Gastrocnemius medialis (tissue), 4 donors: ENCODE measurements at regions of chr1 and their contacts with region 1.

Region 1: DNA sequence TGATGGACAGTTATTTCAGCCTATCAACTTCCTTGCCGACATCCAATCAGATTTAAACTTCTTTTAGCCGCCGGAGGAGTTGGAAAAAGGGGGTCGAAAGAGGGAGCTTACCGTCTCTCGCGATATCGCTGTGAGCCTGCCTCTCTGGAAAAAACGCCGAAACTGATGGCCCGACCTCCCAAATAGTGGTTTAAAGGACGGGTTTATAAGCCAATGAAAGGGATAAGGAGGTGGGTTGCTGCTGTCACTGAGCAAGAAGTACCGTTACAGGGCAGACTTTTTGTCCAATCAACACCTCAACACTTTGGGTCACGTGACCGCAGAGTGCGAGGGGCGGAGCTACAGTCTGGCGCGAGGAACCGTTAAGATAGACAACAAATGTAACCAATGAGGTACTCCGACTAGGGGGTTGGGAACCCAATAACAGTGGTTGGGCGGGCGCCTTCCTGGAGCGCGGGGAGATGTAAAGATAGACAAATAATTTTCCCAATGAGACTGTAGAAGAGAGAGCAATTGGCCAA is at the start of gene RBM15:
- DNase-seq: peak; percentile 99 to 100
- ATAC-seq: peak; percentile 74 to 82
- H3K4me3 ChIP-seq: peak within 1 kb of the TSS; percentile 78 to 88 (median 84)
- H3K27ac ChIP-seq: peak within 1 kb of the TSS; percentile 93 to 99 (median 96)
- H3K4me1 ChIP-seq: peaks cover 45 to 51% of the 10 kb centered on the region in 2 donors
- H3K27me3 ChIP-seq: no peaks in the 10 kb centered on the region
- CTCF ChIP-seq: no peak
- POLR2A ChIP-seq: no peak
- total RNA-seq, gene RBM15: 27.8 to 44.9 (median 30.2) TPM

Region 2: DNA sequence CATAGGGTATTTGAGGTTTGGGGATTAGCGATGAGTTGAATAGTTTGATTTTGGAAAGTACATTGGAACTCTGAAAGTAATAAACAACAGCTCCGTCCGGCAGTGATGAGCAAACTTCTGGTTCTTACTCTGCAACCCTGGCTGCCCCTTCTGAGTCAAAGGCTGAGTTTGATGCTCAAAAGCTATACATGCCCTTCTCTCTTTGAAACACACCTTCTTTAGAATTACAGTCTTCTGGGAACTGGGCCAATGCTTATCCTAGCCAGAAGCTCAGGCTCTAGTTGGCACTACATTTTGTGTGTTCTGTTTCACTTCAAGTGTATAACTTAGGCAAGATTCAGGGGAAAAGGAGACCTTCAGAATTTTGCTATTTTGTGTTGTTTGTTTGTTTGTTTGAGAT is 345.1 kb before region 1 on chr1:
- in situ Hi-C with region 1: no loop called
- intact Hi-C with region 1: loop called (anchors 10 kb)
- DNase-seq: no peak
- ATAC-seq: no peak
- H3K4me3 ChIP-seq: no peak overlapping the region
- H3K27ac ChIP-seq: peak overlapping the region; percentile 39 to 89 (median 78)
- H3K4me1 ChIP-seq: peaks cover 91% of the 10 kb centered on the region in 2 donors
- H3K27me3 ChIP-seq: no peaks in the 10 kb centered on the region
- CTCF ChIP-seq: no peak
- POLR2A ChIP-seq: no peak

Region 3: DNA sequence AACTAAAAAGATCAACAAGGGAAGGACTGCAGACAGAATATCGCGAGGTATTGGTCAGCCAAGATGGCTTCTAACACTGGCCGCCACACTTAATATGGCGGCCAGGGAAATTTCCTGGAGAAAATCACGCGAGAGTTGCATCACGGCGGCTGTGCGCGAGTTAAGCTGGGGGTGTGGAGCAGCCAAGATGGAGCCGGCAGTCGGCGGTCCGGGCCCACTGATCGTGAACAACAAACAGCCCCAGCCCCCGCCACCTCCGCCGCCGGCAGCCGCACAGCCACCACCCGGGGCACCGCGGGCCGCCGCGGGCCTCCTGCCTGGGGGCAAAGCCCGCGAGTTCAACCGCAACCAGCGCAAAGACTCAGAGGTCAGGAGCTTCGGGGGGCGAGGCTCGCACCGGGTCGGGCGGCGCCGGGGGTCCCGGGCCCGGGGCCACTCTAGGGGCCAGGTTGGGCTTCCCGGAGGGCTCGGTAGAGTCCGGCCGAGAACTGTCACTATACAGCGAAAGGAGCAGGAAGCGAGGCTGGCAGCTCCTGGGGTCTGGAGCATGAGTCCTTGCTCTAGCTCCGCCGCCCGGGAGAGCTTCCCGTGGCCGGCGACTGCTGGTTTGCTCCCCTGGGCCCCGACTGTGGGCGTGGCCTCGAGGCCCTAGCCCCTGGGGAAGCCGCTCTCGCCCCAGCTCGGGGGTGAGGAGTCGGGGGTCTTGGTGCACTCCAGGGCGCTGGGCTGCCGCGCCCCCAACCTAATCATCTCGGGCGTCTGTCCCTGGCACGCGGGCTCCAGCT is 304.3 kb before region 1 on chr1 and contains the start of gene STRIP1:
- in situ Hi-C with region 1: loop called in 1 of 4 experiments (anchors 25 kb)
- intact Hi-C with region 1: loop called (anchors 1 kb)
- DNase-seq: peak; percentile 87 to 92
- ATAC-seq: peak; percentile 98 to 99
- H3K4me3 ChIP-seq: peak within 1 kb of the TSS; percentile 80 to 97 (median 83)
- H3K27ac ChIP-seq: peak within 1 kb of the TSS; percentile 85 to 95 (median 90)
- H3K4me1 ChIP-seq: peaks cover 14 to 20% of the 10 kb centered on the region in 2 donors
- H3K27me3 ChIP-seq: no peaks in the 10 kb centered on the region
- CTCF ChIP-seq: no peak
- POLR2A ChIP-seq: peak; percentile 49 to 69
- total RNA-seq, gene STRIP1: 17.9 to 31.4 (median 20.7) TPM

Region 4: GRCh38 chr1:110407260-110408210 is 68.6 kb after region 1 on chr1 and contains the start of gene LAMTOR5:
- in situ Hi-C with region 1: loop called (anchors 5 to 10 kb)
- intact Hi-C with region 1: loop called (anchors 2 kb)
- DNase-seq: peak; percentile 93 to 95
- ATAC-seq: peak; percentile 96 to 98
- H3K4me3 ChIP-seq: peak within 1 kb of the TSS; percentile 78 to 98 (median 91)
- H3K27ac ChIP-seq: peak within 1 kb of the TSS; percentile 92 to 99 (median 95)
- H3K4me1 ChIP-seq: peaks cover 32% of the 10 kb centered on the region in 2 donors
- H3K27me3 ChIP-seq: no peaks in the 10 kb centered on the region
- CTCF ChIP-seq: peak in 2 of 5 experiments; percentile 4 to 18
- POLR2A ChIP-seq: peak; percentile 93 to 94
- total RNA-seq, gene LAMTOR5: 116 to 203 (median 153) TPM

Region 5: DNA sequence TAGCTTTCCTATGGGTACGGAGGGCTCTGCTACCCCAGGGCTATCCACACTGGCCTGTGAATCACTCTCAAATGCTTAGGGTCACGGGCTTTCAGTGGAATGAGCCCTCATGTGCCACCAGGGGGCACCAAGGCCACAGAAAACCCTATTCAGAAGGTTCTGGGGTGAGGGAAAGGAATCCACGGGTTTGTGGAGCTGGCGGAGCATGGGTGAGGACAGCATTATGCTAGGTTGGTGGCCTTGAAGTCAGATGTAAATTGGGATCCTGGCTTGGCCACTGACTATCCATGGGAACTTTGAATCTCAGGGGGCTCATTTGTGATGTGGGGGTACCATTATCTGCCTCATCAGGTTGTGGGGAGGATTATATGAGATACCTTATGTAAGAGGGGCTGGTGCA is 73.6 kb after region 1 on chr1:
- in situ Hi-C with region 1: loop called in 3 of 4 experiments (anchors 5 to 10 kb)
- intact Hi-C with region 1: loop called (anchors 2 kb)
- DNase-seq: peak; percentile 31 to 62
- ATAC-seq: peak; percentile 25 to 53
- H3K4me3 ChIP-seq: no peak overlapping the region
- H3K27ac ChIP-seq: no peak overlapping the region
- H3K4me1 ChIP-seq: peaks cover 18 to 27% of the 10 kb centered on the region in 2 donors
- H3K27me3 ChIP-seq: no peaks in the 10 kb centered on the region
- CTCF ChIP-seq: peak; percentile 35 to 67 (median 55)
- POLR2A ChIP-seq: no peak

Region 6: GRCh38 chr1:110460253-110461220 is 121.6 kb after region 1 on chr1:
- in situ Hi-C with region 1: loop called in 1 of 4 experiments (anchors 10 kb)
- intact Hi-C with region 1: no loop called
- DNase-seq: peak; percentile 54 to 68
- ATAC-seq: peak; percentile 93 to 95
- H3K4me3 ChIP-seq: no peak overlapping the region
- H3K27ac ChIP-seq: no peak overlapping the region
- H3K4me1 ChIP-seq: no peaks in the 10 kb centered on the region
- H3K27me3 ChIP-seq: no peaks in the 10 kb centered on the region
- CTCF ChIP-seq: peak; percentile 89 to 96 (median 94)
- POLR2A ChIP-seq: no peak

Region 7: GRCh38 chr1:110524311-110525251 is 185.6 kb after region 1 on chr1:
- in situ Hi-C with region 1: no loop called
- intact Hi-C with region 1: no loop called
- DNase-seq: no peak
- ATAC-seq: peak in 1 of 2 donors; percentile 42
- H3K4me3 ChIP-seq: no peak overlapping the region
- H3K27ac ChIP-seq: no peak overlapping the region
- H3K4me1 ChIP-seq: peaks cover 0 to 8% of the 10 kb centered on the region in 2 donors
- H3K27me3 ChIP-seq: peaks cover 0 to 10% (median 0%) of the 10 kb centered on the region in 3 donors
- CTCF ChIP-seq: peak in 4 of 5 experiments; percentile 17 to 53 (median 42)
- POLR2A ChIP-seq: no peak